ENCODE measurements at regions of chr10 and their contacts with region 1.

Region 1: DNA sequence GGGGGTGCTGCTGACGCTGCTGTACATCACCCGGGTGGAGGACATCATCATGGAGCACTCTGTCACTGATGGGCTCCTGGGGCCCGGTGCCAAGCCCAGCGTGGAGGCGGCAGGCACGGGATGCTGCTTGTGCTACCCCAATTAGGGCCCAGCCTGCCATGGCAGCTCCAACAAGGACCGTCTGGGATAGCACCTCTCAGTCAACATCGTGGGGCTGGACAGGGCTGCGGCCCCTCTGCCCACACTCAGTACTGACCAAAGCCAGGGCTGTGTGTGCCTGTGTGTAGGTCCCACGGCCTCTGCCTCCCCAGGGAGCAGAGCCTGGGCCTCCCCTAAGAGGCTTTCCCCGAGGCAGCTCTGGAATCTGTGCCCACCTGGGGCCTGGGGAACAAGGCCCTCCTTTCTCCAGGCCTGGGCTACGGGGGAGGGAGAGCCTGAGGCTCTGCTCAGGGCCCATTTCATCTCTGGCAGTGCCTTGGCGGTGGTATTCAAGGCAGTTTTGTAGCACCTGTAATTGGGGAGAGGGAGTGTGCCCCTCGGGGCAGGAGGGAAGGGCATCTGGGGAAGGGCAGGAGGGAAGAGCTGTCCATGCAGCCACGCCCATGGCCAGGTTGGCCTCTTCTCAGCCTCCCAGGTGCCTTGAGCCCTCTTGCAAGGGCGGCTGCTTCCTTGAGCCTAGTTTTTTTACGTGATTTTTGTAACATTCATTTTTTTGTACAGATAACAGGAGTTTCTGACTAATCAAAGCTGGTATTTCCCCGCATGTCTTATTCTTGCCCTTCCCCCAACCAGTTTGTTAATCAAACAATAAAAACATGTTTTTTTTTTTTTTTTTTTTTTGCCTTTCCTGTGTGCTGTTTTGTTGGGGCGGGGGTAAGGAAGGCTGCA is 55.8 kb downstream of the TSPAN15 start:
- DNase-seq: peak in 1 of 3 donors; percentile 56
- ATAC-seq: peak; percentile 15 to 38
- H3K4me3 ChIP-seq: no peak overlapping the region
- H3K27ac ChIP-seq: no peak overlapping the region
- H3K4me1 ChIP-seq: no peaks in the 10 kb centered on the region
- H3K27me3 ChIP-seq: no peaks in the 10 kb centered on the region

Region 2: GRCh38 chr10:69215405-69216176 is 291.5 kb before region 1 on chr10:
- intact Hi-C with region 1: no loop called
- DNase-seq: no peak
- ATAC-seq: no peak
- H3K4me3 ChIP-seq: no peak overlapping the region
- H3K27ac ChIP-seq: no peak overlapping the region
- H3K4me1 ChIP-seq: no peaks in the 10 kb centered on the region
- H3K27me3 ChIP-seq: no peaks in the 10 kb centered on the region

Region 3: DNA sequence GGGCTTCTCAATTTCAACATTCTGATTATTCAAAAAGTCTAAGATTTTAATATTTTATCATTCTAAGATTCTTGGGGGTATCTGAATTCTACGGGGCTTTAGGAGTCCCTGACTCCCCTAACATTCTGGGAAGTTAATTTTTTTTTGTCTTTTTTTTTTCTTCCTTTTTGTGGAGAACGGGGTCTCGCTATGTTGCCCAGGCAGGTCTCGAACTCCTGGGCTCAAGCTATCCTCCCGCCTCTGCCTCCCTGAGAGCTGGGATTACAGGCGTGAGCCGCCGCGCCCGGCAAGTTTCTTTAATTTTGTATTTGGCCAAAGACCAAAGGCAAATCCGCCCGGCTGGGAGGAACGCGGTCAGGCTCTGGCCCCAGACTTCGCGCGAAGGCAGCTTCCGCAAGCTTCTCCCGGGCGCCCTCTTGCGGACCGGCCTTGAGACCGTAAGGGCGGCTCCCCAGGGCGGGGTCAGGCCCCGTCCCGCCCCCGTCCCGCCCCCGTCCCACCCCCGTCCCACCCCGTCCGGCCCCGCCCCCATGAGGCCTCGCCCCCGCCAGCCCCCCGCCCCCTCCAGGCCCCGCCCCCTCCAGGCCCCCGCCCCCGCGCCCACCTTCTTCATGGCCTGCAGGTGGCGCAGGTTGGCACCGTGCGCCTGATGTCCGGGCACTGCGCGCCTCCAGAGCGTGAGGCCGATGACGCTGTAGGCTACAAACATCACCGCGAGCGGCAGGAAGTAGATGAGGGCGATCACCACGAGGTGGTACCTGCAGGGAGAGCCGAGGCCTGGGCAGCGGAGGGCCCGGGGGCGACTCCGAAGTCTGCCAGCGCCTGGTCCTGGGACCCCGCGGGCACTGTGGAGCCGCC is 98.5 kb before region 1 on chr10:
- intact Hi-C with region 1: loop called in 1 of 4 experiments (anchors 5 kb)
- DNase-seq: peak; percentile 97 to 98 (median 98)
- ATAC-seq: peak; percentile 83 to 87
- H3K4me3 ChIP-seq: peak overlapping the region; percentile 26
- H3K27ac ChIP-seq: peak overlapping the region; percentile 90
- H3K4me1 ChIP-seq: peaks cover 10% of the 10 kb centered on the region
- H3K27me3 ChIP-seq: no peaks in the 10 kb centered on the region

Region 4: DNA sequence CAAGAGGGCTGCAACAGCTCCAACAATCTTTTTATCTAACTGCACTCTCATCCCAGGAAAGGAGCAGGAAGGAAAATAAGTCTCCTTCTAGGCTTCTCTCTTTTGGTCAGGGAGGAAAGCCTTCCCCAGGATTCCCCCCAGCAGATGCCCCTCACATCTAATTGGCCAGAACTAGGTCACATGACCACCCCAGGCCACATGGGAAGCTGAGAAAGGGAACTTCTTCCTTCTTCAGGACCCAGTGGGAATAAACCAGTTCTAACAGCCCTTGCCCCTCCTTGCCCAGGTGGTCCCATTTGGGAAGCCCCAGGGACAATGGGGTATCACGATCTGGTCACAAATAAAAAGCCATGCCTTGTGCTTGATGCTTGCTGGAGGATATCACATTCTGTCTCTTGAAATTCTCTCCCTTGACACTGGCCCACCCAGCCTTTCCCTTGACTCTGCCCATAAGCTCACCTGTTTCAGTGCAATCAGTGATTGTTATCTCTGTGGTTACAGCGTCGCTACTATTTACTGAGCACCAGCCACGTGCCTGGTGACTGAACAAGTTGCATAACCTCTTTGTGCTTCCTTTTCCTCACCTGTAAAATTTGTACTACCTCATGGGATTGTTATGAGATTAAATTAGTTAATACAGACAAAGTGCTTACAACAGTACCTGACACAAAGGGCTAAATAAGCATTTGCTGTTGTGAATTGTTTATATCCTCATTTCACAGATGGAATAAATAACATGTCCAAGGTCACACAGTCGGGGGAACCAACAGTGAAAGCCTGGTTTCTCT is 81.4 kb before region 1 on chr10:
- intact Hi-C with region 1: loop called (anchors 5 kb)
- DNase-seq: no peak
- ATAC-seq: no peak
- H3K4me3 ChIP-seq: no peak overlapping the region
- H3K27ac ChIP-seq: no peak overlapping the region
- H3K4me1 ChIP-seq: no peaks in the 10 kb centered on the region
- H3K27me3 ChIP-seq: no peaks in the 10 kb centered on the region